Dendritic cell treated with granulocyte-macrophage colony-stimulating factor and Interleukin-4, amounts not matched to agents 40 ng/mL and 50 ng/mL, for 4 days (primary cell): ENCODE measurements at regions of chr12 and their contacts with region 1.

Region 1: DNA sequence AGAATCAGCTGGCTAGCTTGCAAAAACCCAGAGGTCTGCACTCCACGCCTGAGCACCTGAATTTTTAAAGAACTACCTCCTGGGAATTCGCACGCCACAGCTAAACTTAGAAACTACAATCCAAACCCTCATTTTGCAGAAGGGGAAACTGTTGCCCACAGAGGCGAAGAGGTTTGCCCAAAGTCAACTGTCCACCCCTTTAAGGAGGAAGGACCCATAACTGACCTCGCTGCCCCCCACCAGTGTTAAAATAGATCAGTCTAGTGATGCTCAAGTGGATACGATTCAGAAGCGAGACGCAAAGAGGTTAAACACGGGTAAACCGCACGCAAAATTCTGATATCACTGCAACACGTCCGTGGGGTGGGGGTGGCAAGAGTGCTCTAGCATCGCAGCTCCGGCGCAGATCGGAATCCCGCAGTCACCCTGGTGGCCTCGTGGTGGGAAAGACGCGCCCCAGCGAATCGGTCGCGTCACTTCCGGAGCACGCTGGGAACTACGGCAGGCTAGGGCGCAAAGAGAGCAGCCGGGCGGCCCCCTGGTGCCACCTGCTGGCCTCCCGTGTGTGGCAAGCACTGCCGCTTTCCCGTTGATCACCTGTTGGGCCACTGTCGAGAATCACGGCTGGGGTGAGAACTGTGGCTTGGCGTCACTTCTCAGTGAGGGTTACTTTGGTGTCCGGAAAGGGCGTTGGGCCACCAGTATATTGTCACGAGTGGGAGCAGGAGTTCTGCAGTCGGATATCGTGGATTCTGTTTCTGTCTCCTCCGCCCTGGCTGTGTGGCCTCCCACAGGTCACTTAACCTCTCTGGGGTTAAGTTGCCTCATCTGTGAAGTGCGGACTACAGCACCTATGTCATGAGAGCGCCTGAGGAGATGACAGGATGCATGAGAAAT is at the start of gene ALKBH2:
- H3K4me3 Mint-ChIP-seq: peak within 1 kb of the TSS; percentile 74
- H3K27ac Mint-ChIP-seq: peak within 1 kb of the TSS; percentile 66
- H3K4me1 Mint-ChIP-seq: peaks cover 27% of the 10 kb centered on the region
- H3K27me3 Mint-ChIP-seq: no peaks in the 10 kb centered on the region

Region 2: GRCh38 chr12:108618079-108618952 is 475.0 kb before region 1 on chr12:
- intact Hi-C with region 1: loop called (anchors 10 kb)
- H3K4me3 Mint-ChIP-seq: no peak overlapping the region
- H3K27ac Mint-ChIP-seq: peak overlapping the region; percentile 53
- H3K4me1 Mint-ChIP-seq: peaks cover 83% of the 10 kb centered on the region
- H3K27me3 Mint-ChIP-seq: no peaks in the 10 kb centered on the region

Region 3: GRCh38 chr12:108664338-108665258 is 428.7 kb before region 1 on chr12:
- intact Hi-C with region 1: loop called (anchors 10 kb)
- H3K4me3 Mint-ChIP-seq: peak overlapping the region; percentile 23
- H3K27ac Mint-ChIP-seq: peak overlapping the region; percentile 82
- H3K4me1 Mint-ChIP-seq: peaks cover 51% of the 10 kb centered on the region
- H3K27me3 Mint-ChIP-seq: no peaks in the 10 kb centered on the region

Region 4: DNA sequence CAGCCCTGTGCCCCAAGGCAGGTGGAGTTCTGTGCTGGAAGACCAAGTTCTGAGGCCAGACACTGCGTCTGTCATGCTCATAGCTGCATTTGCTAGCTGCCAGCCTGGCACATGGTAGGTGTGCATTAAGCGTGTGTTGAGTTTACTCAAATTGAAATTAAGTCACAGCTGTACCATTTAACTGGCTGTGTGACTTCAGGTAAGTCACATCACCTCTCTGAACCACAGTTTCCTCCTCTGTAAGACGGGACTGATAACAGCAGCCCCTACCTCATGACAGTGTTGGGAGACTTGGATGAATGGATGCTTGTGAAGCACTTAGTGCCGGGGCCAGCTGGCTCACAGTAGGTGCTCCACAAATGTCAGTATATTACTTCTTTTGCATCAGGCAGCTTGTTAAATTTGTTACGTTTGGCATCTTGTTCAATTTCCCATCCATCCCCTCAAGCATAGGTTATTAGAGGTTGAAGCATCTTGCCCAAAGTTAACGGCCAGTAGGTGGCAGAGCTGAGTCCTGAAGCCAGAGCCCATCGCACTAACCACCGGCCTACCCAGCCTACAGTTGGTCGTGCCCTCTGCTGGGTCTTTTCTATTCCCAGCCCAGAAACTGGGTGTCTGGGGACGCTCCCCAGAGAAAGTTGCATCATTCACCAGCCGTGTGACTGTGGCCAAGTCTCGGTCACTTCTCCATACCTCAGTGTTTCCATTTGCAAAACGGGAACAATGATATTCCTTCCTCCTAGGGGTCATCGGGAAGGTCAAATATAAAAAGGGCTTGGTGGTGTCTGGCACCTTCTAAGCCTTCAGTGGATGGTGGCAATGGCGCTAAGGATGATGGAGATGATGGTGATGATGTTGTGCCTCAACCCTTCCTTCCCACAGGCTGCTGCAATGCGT is 208.9 kb before region 1 on chr12:
- intact Hi-C with region 1: loop called (anchors 10 kb)
- H3K4me3 Mint-ChIP-seq: no peak overlapping the region
- H3K27ac Mint-ChIP-seq: peak overlapping the region; percentile 30
- H3K4me1 Mint-ChIP-seq: peaks cover 11% of the 10 kb centered on the region
- H3K27me3 Mint-ChIP-seq: no peaks in the 10 kb centered on the region

Region 5: DNA sequence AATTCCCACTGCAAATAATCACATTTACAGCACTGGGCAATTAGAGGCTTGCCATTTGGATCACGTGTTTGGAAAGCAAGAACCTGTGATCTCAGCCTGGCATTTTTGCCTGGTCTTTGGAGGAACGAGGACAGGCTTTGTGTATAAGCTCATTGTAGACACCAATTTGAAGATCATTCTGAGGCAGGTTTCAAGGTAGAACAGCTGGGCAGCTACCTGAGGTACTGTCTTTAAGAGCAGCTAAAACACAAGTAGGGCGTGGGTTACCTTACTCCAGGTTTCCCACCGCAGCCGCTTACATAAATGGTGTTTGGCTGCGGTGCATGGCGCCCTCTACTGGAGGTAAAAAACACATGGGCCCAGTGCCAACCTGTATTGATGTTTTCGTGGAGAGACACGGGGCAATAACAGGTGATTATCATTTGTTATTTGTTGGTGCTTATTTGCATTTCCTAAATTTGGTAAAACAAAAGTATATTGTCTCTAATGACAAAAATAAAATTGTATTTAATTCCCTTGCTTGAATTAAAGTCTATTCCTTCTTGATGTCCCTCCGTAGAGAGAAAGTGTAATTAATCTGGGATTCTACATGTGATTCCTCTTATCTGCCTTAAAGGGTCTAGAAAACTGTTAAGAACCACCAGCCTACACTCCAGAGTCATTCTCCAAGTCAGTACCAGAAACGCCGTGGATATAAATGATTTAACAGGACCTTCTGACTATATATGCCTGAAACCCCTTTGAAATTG is 142.1 kb before region 1 on chr12:
- intact Hi-C with region 1: loop called (anchors 10 kb)
- H3K4me3 Mint-ChIP-seq: no peak overlapping the region
- H3K27ac Mint-ChIP-seq: no peak overlapping the region
- H3K4me1 Mint-ChIP-seq: peaks cover 26% of the 10 kb centered on the region
- H3K27me3 Mint-ChIP-seq: peaks cover 15% of the 10 kb centered on the region

Region 6: DNA sequence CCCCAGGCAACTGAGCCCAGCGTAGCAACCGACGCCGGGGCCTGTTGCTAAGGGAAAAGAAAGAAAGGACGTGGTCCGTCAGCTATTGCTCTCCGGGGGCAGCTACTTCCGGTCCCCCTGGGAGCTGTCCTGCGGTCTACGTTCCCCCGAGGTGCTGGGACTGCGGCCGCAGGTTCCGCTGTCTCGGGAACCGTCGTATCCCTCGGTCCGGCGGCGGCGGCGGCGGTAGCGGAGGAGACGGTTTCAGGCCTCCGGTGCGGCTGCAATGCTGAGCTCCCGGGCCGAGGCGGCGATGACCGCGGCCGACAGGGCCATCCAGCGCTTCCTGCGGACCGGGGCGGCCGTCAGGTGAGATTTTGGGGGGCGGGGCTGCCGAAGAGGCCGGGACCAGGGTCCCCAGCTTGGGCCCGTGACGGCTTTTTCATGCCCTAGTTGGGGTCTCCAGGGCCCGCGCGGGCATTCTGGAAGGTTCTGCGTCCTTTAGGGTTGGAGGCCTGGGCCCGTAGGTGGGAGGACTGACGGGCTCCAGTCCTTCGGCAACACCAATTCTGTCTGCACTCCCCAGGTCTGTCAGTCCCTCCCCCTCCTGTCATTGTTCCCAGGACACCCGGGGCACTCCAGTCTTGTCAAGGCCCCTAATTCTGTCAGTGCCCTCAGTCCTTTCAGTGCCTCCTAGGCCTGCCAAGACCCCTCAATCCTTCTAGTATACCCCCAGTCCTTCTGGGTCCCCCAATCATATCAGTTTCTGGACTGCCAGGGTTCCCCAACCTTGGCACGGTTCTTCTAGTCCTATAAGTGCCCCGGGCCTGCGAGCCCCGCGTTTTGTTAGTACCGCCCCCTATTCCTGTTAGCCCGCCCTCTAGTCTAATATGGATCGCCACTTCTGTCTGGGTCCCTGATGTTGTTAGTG is 40.6 kb before region 1 on chr12 and contains the start of gene USP30:
- intact Hi-C with region 1: loop called (anchors 1 kb)
- H3K4me3 Mint-ChIP-seq: peak within 1 kb of the TSS; percentile 83
- H3K27ac Mint-ChIP-seq: peak within 1 kb of the TSS; percentile 85
- H3K4me1 Mint-ChIP-seq: peaks cover 25% of the 10 kb centered on the region
- H3K27me3 Mint-ChIP-seq: peaks cover 2% of the 10 kb centered on the region

Region 7: GRCh38 chr12:109110988-109111495 is 17.8 kb after region 1 on chr12:
- intact Hi-C with region 1: loop called (anchors 1 kb)
- H3K4me3 Mint-ChIP-seq: peak overlapping the region; percentile 83
- H3K27ac Mint-ChIP-seq: peak overlapping the region; percentile 87
- H3K4me1 Mint-ChIP-seq: peaks cover 30% of the 10 kb centered on the region
- H3K27me3 Mint-ChIP-seq: no peaks in the 10 kb centered on the region

Region 8: DNA sequence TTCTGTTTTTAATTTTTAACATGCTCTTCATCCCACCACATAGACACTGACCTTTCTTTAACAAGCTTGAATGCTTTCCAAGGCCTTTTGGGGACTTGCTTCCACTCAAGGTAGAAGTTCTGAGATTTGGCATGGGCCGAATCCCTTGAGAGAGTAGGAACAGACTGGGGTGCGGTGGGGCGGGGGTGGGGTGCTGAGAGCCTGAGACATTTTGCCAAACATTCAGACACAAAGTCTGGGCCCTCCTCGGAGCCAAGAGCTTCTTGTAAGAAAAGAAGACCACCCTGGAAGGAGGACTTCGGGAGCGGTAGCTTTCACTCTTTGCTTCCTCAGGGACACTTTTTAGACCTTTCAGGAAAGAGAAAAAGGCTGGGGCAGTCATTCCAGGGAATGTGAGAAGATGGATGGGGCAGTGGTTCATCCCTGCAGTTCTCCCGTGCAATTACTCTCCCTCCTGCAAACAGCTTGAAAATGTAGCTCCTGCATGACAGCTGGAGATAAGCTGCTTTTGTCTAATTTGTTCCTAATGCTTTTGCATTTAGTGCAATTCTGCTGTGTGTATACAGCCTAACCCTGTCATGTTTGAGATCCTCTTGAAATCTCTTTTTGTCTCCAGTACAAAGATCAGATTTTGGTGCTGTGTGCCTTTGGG is 238.2 kb after region 1 on chr12:
- intact Hi-C with region 1: no loop called
- H3K4me3 Mint-ChIP-seq: no peak overlapping the region
- H3K27ac Mint-ChIP-seq: no peak overlapping the region
- H3K4me1 Mint-ChIP-seq: no peaks in the 10 kb centered on the region
- H3K27me3 Mint-ChIP-seq: peaks cover 2% of the 10 kb centered on the region